Activated CD4-positive, alpha-beta T cell treated with anti-CD3 and anti-CD28 coated beads, Interleukin-2, amount 10 ng/mL, durations not matched to agents 24 days and 14 days (primary cell): ENCODE measurements at regions of chr16 and their contacts with region 1.

Region 1: GRCh38 chr16:31458844-31459721 is at the start of gene ARMC5:
- DNase-seq: peak; percentile 99
- H3K4me3 Mint-ChIP-seq: peak within 1 kb of the TSS; percentile 95
- H3K27ac Mint-ChIP-seq: peak within 1 kb of the TSS; percentile 98
- H3K4me1 Mint-ChIP-seq: peaks cover 30% of the 10 kb centered on the region
- H3K27me3 Mint-ChIP-seq: no peaks in the 10 kb centered on the region
- total RNA-seq, gene ARMC5: 9.9 and 10.5 TPM in 2 replicates

Region 2: DNA sequence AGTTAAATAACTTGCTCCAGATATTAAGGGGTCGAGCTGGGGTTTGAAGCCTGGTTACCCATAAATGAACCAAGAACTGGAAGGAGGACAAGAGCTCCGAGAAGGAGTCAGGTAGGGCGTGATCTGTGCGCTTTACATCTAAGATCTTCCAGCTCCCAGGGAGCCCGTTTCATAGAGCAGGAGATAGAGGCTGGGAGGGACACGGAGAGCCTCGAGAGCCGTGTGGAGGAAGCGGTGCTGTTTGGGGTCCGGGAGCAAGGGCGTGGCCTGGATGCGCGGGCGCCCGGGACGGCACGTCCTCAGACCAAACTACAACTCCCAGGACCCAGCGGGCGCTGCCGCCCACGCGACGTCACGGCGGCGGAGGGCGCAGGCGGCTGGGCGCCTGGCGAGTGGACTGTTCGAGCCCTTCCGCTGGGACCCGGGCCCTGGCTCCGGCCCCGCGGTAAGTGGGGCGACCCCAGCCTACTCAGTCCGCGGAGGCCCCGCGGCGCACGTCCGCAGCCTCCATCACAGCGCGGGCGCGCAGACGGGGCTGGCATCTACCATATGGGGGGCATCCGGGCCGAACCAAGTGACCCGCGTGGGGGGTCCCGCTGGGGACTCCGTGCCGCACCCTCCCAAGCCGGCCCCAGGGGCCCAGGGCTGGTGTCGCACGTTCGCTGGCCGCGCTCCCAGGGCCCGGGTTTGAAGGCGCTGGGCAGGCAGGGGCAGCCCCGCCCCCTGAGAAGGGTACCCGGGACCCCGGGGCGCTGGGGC is 350.9 kb before region 1 on chr16 and contains the start of gene BCKDK:
- intact Hi-C with region 1: loop called (anchors 10 kb)
- DNase-seq: peak; percentile 93
- H3K4me3 Mint-ChIP-seq: peak within 1 kb of the TSS; percentile 92
- H3K27ac Mint-ChIP-seq: peak within 1 kb of the TSS; percentile 95
- H3K4me1 Mint-ChIP-seq: peaks cover 22% of the 10 kb centered on the region
- H3K27me3 Mint-ChIP-seq: no peaks in the 10 kb centered on the region
- total RNA-seq, gene BCKDK: 44.3 and 44.9 TPM in 2 replicates

Region 3: GRCh38 chr16:31440516-31441184 is 18.4 kb before region 1 on chr16:
- intact Hi-C with region 1: loop called (anchors 1 kb)
- DNase-seq: no peak
- H3K4me3 Mint-ChIP-seq: no peak overlapping the region
- H3K27ac Mint-ChIP-seq: no peak overlapping the region
- H3K4me1 Mint-ChIP-seq: peaks cover 21% of the 10 kb centered on the region
- H3K27me3 Mint-ChIP-seq: peaks cover 5% of the 10 kb centered on the region

Region 4: GRCh38 chr16:31507929-31508705 is 49.0 kb after region 1 on chr16 and contains the start of gene RUSF1:
- intact Hi-C with region 1: loop called (anchors 1 kb)
- DNase-seq: peak; percentile 96
- H3K4me3 Mint-ChIP-seq: peak within 1 kb of the TSS; percentile 95
- H3K27ac Mint-ChIP-seq: peak within 1 kb of the TSS; percentile 94
- H3K4me1 Mint-ChIP-seq: peaks cover 38% of the 10 kb centered on the region
- H3K27me3 Mint-ChIP-seq: no peaks in the 10 kb centered on the region
- total RNA-seq, gene RUSF1: 40.9 and 41.1 TPM in 2 replicates

Region 5: GRCh38 chr16:31868691-31869167 is 409.6 kb after region 1 on chr16:
- intact Hi-C with region 1: loop called (anchors 1 kb)
- DNase-seq: peak; percentile 94
- H3K4me3 Mint-ChIP-seq: peak overlapping the region; percentile 75
- H3K27ac Mint-ChIP-seq: peak overlapping the region; percentile 95
- H3K4me1 Mint-ChIP-seq: peaks cover 53% of the 10 kb centered on the region
- H3K27me3 Mint-ChIP-seq: peaks cover 5% of the 10 kb centered on the region